ENCODE measurements at regions of chr1 and their contacts with region 1.

Region 1: GRCh38 chr1:167238713-167239112 is 18.0 kb downstream of the POU2F1 start:
- DNase-seq: no peak
- H3K4me3 Mint-ChIP-seq: no peak overlapping the region
- H3K27ac Mint-ChIP-seq: no peak overlapping the region
- H3K4me1 Mint-ChIP-seq: peaks cover 18% of the 10 kb centered on the region
- H3K27me3 Mint-ChIP-seq: no peaks in the 10 kb centered on the region

Region 2: DNA sequence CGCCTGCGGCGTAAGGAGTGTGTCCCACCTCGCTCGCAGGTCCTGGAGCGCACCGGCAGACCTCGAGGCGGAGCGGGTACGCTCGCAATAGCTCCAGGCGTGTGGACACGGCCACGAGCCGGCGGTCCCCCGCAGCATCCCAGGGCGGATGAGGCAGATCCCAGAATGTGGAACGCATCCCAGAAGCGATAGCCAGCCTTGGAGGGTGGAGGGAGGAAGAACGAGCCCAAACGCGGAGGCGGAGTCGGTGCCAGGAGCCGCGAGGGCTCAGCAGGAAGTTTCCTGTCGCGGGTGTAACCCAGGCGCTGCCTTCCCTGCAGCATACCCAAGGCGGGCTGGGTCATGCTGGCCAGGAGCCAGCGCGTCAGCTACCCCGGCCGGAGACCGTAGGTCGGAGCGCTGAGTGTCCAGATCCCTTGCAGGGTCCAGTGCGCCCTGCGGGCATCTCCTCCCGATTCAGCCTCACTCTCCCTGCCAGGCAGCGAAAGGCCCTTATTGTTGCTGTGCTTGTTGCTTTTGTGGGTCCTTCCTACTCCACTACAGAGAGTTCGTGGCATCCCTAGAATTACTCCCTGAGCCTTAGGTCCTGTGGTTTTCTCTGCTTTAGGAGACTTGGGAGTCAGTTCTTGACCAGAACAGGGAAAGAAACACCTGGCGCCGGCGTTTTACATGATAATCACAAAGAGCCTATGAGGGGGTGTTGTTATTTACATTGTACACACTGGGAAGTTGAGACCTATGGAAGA is 117.2 kb before region 1 on chr1:
- CTCF ChIA-PET with region 1: no interaction called
- intact Hi-C with region 1: no loop called
- DNase-seq: peak; percentile 58
- H3K4me3 Mint-ChIP-seq: peak overlapping the region; percentile 81
- H3K27ac Mint-ChIP-seq: no peak overlapping the region
- H3K4me1 Mint-ChIP-seq: peaks cover 3% of the 10 kb centered on the region
- H3K27me3 Mint-ChIP-seq: peaks cover 2% of the 10 kb centered on the region

Region 3: DNA sequence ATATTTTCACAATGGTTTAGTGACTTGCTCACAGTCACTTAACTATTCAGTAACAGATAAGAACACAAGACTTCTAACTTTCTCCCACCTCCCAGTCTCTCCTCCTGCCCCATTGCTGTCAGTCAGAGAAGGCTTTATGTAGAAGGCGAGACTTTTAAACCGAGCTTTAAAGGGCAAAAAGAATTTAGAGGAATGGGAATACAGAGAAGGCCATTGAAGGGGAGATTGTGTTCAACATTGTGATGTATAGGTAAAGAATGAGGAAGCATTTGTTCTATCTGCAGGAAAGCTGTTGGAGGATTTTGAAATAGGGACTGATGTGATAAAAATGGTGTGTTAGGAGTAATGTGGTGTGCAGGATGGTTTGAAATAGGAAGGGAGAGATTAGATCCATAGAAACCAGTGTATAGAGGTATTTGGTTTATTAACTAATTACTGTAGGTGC is 10.8 kb before region 1 on chr1:
- CTCF ChIA-PET with region 1: interaction called, 8 read pairs
- intact Hi-C with region 1: loop called (anchors 2 kb)
- DNase-seq: no peak
- H3K4me3 Mint-ChIP-seq: no peak overlapping the region
- H3K27ac Mint-ChIP-seq: no peak overlapping the region
- H3K4me1 Mint-ChIP-seq: peaks cover 49% of the 10 kb centered on the region
- H3K27me3 Mint-ChIP-seq: no peaks in the 10 kb centered on the region